Activated CD4-positive, alpha-beta T cell treated with anti-CD3 and anti-CD28 coated beads, Interleukin-2, amount 10 ng/mL, durations not matched to agents 7 days and 5 days (primary cell): ENCODE measurements at regions of chr20 and their contacts with region 1.

Region 1: DNA sequence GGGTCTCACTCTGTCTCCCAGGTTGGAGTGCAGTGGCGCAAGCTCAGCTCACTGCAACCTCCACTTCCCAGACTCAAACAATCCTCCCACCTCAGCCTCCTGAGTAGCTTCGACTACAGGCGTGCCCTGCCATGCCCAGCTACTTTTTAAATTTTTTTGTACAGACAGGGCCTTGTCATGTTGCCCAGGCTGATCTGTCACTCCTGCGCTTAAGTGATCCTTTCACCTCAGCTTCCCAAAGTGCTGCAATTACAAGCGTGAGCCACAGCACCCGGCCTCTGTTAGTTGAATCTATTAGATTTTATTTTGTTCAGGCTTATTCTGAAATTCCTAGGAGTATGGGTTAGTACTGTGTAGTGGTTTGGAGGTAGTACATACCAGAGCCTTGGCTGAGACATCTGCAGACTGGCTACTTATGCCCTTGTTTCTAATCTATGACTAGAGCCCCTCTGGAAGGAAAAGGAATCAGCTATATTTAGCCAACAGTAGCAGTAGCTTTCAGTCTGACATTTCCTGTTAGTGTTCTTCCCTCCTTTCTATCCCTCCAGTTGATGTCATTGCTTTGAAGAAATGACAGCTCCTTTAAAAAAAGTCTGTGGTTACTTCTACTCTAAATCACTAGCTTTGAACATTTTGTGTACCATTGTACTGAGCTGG is 74.4 kb downstream of the ITCH start:
- DNase-seq: no peak
- H3K4me3 Mint-ChIP-seq: no peak overlapping the region
- H3K27ac Mint-ChIP-seq: peak overlapping the region; percentile 52
- H3K4me1 Mint-ChIP-seq: peaks cover 22% of the 10 kb centered on the region
- H3K27me3 Mint-ChIP-seq: no peaks in the 10 kb centered on the region

Region 2: GRCh38 chr20:34222208-34222607 is 215.2 kb before region 1 on chr20:
- CTCF ChIA-PET with region 1: no interaction called
- POLR2A ChIA-PET with region 1: no interaction called
- DNase-seq: no peak
- H3K4me3 Mint-ChIP-seq: no peak overlapping the region
- H3K27ac Mint-ChIP-seq: no peak overlapping the region
- H3K4me1 Mint-ChIP-seq: peaks cover 2% of the 10 kb centered on the region
- H3K27me3 Mint-ChIP-seq: peaks cover 22% of the 10 kb centered on the region

Region 3: DNA sequence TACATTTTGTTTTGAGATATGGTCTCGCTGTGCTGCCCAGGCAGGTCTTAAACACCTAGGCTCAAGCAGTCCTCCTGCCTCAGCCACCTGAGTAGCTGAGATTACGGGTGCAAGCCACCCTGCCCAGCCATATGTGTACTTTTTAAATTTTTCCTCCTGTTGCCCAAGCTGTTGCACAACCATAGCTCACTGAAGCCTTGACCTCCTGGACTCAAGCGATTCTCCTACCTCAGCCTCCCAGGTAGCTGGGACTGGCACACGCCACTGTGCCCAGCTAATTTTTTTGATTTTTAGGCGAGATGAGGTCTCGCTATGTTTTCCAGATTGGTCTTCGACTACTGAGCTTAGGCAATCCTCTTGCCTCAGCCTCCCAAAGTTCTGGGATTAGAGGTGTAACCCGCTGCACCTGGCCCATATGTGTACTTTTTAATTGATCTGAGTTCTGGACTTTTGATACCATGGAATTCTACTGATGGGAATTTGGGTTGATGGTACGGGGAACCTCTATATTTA is 29.4 kb before region 1 on chr20:
- CTCF ChIA-PET with region 1: interaction called, 10 read pairs
- POLR2A ChIA-PET with region 1: no interaction called
- DNase-seq: no peak
- H3K4me3 Mint-ChIP-seq: no peak overlapping the region
- H3K27ac Mint-ChIP-seq: no peak overlapping the region
- H3K4me1 Mint-ChIP-seq: peaks cover 34% of the 10 kb centered on the region
- H3K27me3 Mint-ChIP-seq: no peaks in the 10 kb centered on the region

Region 4: DNA sequence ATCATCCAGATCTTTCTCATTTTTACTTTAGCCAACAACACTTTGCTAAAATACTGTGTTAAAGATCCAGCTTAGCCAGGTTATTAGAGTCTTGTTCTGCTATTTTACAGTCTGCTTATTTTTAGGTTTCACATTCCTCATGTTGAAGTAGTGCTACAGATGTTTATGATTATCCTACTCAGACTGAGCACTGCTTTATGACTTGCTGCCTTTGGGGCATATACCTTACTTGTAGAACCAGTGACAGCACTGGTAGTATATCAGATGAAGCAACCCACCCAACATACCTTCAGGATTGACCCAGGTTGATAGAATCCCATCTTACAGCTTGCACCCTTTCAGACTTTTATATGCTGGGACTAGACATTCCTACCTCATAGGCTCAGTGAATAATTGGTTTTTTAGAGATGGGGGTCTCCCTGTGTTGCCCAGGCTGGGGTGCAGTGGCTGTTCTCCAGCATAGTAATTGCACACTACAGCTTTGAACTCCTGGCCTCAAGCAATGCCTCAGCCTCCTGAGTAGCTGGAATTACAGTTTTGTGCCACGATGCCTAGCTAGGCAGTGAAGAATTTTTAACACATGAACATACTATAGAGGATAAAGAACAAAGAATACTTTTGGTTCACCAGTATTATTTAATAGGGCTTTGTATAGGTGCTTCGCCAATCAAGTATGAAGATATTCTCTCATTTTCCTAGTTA is 15.0 kb after region 1 on chr20:
- CTCF ChIA-PET with region 1: no interaction called
- POLR2A ChIA-PET with region 1: no interaction called
- DNase-seq: no peak
- H3K4me3 Mint-ChIP-seq: no peak overlapping the region
- H3K27ac Mint-ChIP-seq: peak overlapping the region; percentile 12
- H3K4me1 Mint-ChIP-seq: peaks cover 2% of the 10 kb centered on the region
- H3K27me3 Mint-ChIP-seq: no peaks in the 10 kb centered on the region